Breast epithelium (tissue), 4 donors: ENCODE measurements at regions of chr6 and their contacts with region 1.

Region 1: GRCh38 chr6:163180874-163181541 is 233.5 kb upstream of the QKI start:
- DNase-seq: peak in 1 of 2 donors; percentile 32
- H3K4me3 ChIP-seq: peak overlapping the region in 1 of 3 donors; percentile 49
- H3K27ac ChIP-seq: no peak overlapping the region
- H3K4me1 ChIP-seq: no peaks in the 10 kb centered on the region
- H3K27me3 ChIP-seq: no peaks in the 10 kb centered on the region
- CTCF ChIP-seq: peak in 2 of 3 donors; percentile 50 to 55
- POLR2A ChIP-seq: no peak

Region 2: DNA sequence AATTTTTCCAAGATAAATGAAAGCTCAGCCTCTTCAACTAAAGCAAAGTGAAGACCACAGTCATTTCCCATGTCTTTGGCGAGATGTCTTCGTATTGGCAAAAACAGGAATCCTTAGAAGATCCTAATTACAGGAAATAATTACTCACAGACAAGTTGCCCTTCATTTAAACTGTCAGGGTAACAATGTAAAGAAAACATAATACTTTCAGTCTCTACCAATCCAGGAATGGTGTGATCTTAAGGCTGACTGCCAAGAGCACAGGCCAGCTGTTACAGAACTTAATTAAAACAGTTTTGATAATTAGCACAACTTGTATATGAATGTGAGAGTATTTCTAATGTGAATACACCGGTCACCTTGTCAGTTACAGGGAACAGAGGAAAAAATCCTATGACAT is 161.1 kb before region 1 on chr6:
- intact Hi-C with region 1: loop called (anchors 5 kb)
- DNase-seq: no peak
- H3K4me3 ChIP-seq: no peak overlapping the region
- H3K27ac ChIP-seq: no peak overlapping the region
- H3K4me1 ChIP-seq: no peaks in the 10 kb centered on the region
- H3K27me3 ChIP-seq: no peaks in the 10 kb centered on the region
- CTCF ChIP-seq: no peak
- POLR2A ChIP-seq: no peak

Region 3: GRCh38 chr6:163309491-163310026 is 128.6 kb after region 1 on chr6:
- intact Hi-C with region 1: no loop called
- DNase-seq: no peak
- H3K4me3 ChIP-seq: no peak overlapping the region
- H3K27ac ChIP-seq: no peak overlapping the region
- H3K4me1 ChIP-seq: no peaks in the 10 kb centered on the region
- H3K27me3 ChIP-seq: no peaks in the 10 kb centered on the region
- CTCF ChIP-seq: no peak
- POLR2A ChIP-seq: no peak

Region 4: GRCh38 chr6:163413345-163414116 is 232.5 kb after region 1 on chr6:
- intact Hi-C with region 1: loop called (anchors 10 kb)
- DNase-seq: peak; percentile 81 to 82
- H3K4me3 ChIP-seq: peak overlapping the region; percentile 95 to 99 (median 97)
- H3K27ac ChIP-seq: peak overlapping the region; percentile 99 to 100
- H3K4me1 ChIP-seq: no peaks in the 10 kb centered on the region
- H3K27me3 ChIP-seq: no peaks in the 10 kb centered on the region
- CTCF ChIP-seq: no peak
- POLR2A ChIP-seq: peak; percentile 28